ENCODE measurements at regions of chr12 and their contacts with region 1.

Region 1: DNA sequence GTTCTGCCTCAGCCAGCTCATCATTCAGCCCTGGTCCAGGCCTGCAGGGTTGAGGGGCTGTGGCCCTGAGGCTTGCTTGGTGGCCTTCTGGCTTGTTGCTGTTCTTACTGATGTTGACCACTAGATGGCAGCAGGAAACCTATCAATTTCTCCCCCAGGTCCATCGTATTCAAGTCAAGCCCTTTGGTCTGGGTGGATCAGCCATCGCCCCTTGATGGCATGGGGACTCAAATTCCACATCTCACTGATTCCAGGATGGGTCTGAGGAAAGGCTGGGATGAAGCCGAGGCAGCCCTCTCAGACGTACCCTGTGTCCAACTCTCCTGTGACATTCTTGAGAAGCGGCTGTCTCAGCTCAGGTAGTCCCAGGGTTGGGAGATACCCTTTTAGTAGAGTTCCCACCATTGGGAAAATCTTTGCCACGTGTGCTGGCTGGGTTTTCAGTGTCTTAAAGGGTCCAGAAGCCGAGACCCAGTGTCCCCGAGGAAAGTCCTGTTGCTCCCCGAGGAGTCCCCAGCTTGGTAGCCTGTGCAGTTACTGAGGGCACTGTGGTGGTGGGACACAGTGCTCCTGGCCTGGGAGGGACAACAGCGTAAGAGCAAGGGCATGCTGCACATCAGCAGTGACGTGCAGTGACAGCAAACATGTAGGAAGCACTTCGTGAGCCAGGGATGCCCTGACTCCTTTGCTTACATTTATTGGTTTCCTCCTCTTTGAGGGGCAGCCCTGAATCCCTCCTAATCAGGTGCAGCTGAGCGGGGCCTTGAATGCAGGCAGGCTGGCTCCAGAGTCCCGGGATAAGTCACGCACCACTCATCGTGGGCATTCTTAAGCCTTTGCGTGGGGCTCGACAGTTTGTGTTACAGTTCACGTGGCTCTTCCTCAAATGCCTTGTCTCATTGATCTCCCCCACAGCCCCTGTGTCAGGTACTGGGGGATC is 58.6 kb downstream of the TSPAN9 start:
- DNase-seq: peak; percentile 69
- ATAC-seq: peak; percentile 88
- H3K4me3 ChIP-seq: no peak overlapping the region
- H3K27ac ChIP-seq: no peak overlapping the region
- H3K4me1 ChIP-seq: no peaks in the 10 kb centered on the region
- H3K27me3 ChIP-seq: no peaks in the 10 kb centered on the region
- CTCF ChIP-seq: peak; percentile 79

Region 2: DNA sequence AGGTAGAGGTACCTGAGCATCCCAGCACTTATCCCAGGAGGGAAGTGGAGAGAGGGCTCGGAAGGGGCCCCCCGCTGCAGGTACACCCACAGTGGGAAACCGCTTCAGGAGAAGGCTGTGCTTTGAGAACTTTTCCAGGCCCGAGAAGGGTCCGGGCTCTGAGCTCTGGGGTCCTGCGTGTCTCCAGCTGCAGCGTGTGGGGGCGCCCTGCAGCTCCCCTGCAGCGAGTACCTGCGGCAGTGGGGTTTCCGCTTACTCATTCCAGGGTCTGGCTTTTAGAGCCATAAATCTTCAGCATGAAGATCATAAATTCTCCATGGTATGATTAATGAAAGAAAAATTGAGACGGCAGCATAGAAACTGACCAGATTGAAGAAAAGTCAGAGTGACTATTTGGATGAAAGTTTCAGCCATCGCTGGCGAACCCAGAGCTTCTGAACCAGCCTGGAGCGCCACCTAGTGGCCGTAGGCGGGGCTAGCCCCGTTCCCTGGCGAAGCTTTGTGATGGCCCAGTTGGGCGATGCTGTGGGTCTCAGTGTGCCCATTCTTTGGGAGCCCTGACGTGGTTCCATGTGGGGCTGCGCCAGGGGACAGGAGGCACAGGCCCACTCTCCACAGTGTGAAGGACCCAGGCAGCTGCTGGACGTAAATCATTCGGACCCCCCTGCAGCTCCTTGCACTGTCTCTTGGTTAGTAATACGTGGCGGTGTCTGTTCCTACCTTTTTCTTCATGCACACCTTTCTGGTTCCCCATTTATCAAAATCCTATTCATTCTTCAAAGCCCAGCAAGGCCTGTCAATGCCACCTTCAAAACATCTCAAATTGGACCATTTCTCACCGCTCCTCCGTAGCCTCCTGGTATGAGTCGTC is 139.6 kb after region 1 on chr12:
- CTCF ChIA-PET with region 1: interaction called, 5 read pairs
- POLR2A ChIA-PET with region 1: no interaction called
- intact Hi-C with region 1: loop called (anchors 1 kb)
- DNase-seq: peak; percentile 81
- ATAC-seq: peak; percentile 65
- H3K4me3 ChIP-seq: no peak overlapping the region
- H3K27ac ChIP-seq: no peak overlapping the region
- H3K4me1 ChIP-seq: peaks cover 13% of the 10 kb centered on the region
- H3K27me3 ChIP-seq: no peaks in the 10 kb centered on the region
- CTCF ChIP-seq: peak; percentile 94